ENCODE measurements at regions of chr13 and their contacts with region 1.

Region 1: DNA sequence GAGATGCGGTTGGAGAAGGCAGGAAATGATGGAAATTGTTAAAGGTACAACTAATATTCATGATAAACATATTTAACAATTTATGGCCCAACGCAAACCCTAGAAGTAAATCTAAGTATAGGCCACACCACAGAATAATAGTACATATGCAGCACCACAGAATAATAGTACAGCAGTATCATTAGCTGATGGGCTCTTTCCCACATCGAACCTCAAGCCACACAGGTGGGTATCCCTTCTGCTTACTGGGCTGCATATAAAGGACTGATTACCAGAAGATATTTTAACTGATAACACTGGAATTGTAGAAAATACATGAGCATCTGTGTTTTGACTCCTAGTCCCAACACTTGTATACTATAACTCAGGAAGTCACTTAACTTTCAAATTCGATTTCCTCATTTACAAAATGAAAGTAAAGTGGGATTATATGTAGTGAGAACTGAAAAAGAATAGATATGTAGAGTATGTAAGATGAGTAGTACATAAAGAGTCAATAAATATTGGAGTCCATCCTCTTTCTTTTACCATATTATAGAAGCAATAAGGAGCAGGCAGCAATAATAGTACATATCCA is 91.5 kb downstream of the TSC22D1 start:
- DNase-seq: no peak
- ATAC-seq: no peak
- H3K4me3 ChIP-seq: no peak overlapping the region
- H3K27ac ChIP-seq: no peak overlapping the region
- H3K4me1 ChIP-seq: peaks cover 0 to 16% of the 10 kb centered on the region in 2 donors
- H3K27me3 ChIP-seq: no peaks in the 10 kb centered on the region
- CTCF ChIP-seq: no peak

Region 2: DNA sequence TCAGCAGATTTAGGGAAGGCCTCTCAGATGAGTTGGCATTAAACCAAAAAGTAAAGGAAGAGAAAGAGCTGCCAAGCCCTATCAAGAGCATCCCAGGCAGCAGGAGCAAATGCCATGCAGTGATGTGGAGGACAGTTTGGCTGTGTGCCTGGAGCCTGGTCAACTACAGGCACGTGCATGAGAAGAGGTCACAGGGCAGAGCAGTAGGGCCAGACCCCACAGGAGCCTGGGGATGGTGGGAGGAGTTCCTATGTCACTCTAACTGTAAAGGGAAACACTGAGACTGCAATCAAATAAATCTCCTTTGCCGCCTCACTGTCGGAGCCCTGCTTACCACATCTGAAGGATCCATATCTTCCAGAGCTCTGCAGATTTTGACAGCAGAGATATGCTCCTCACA is 938.4 kb before region 1 on chr13:
- intact Hi-C with region 1: no loop called
- DNase-seq: no peak
- ATAC-seq: no peak
- H3K4me3 ChIP-seq: no peak overlapping the region
- H3K27ac ChIP-seq: no peak overlapping the region
- H3K4me1 ChIP-seq: no peaks in the 10 kb centered on the region
- H3K27me3 ChIP-seq: no peaks in the 10 kb centered on the region
- CTCF ChIP-seq: no peak

Region 3: DNA sequence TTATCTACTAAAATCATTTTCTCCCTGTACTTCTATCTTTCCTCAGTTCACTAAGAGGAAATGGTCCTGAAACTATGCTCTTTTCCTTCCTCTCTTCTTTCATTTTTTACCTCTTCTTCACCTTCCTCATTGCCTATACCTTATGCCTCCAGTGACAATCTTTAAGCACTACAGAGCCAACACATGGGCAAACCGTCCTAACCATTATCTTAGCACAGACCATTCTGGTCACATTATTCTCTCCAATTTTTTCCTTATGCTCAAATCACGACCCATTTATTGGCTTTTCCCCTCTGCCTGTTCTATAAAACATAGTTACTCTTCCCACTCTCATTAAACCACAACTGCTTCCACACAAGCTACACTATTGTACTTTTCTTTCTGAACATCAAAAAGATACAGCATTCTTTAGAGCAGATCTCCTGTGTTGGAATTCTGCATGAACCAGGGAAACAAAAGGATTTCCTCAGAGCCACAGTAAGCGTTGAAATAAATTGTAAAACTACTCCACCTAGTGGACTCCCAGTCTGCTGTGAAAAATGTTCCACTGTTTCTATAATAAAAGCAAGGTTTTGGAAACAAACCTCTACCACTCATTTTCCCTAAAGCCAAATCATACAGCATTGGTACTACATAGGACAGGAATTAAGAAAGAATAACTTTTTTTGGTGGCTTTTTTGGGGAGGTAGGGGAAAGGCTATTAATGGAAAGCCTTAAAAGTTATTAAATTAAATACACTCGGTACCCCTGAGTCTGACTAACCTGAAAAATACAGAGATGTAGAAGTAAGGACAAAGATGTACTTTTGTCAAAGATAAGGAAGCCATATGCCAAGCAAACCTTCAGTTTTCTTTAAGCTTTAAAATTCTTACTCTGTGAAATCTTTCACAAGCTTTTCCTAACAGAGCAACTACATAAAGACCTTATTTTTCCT is 485.2 kb after region 1 on chr13:
- intact Hi-C with region 1: loop called in 1 of 2 experiments (anchors 10 kb)
- DNase-seq: peak in 2 of 4 donors; percentile 42 to 63
- ATAC-seq: peak; percentile 80
- H3K4me3 ChIP-seq: no peak overlapping the region
- H3K27ac ChIP-seq: no peak overlapping the region
- H3K4me1 ChIP-seq: peaks cover 0 to 35% of the 10 kb centered on the region in 2 donors
- H3K27me3 ChIP-seq: no peaks in the 10 kb centered on the region
- CTCF ChIP-seq: peak; percentile 57 to 72